Activated B cell treated with CpG ODN at 0.5 μM for 24 hours (primary cell): ENCODE measurements at regions of chr2 and their contacts with region 1.

Region 1: DNA sequence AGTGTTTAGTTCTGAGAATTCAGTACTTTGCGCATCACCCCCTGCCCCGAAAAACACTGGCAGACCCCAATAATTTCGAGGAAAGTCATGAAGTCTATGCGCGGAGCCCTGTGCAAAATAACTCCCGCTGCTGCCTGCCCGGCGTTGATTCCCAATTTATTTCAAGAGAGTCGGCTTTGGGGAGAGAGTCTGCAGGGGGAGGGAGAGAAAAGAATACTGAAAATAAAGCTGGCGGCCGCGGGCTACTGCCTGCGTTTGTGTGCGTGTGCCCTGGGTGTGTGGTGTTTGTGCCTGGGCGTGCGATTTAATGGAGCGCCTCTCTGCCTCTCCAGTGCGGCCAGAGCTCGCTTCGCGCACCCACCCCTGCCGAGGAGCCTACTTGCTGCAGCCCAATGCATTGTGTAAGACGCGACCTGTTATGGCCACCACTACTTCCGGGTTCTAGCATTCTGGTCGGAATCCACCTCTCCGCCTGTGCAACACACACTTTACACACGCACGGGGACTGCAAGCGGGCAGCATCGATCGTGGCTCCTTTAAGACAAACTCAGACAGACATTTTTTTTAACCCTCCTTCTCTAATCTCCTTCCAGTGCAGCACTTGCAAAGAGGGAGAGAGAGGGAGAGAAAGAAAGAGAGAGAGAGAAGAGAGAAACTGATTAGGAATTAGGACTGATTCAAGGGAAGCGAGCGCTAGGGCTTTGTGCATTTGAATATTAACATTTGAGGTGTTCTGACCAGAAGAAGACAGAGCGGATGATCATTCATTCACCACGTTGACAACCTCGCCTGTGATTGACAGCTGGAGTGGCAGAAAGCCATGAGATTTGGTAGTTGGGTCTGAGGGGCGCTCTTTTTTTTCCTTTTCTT is at the start of gene MEIS1:
- DNase-seq: no peak
- ATAC-seq: peak; percentile 61
- H3K4me3 Mint-ChIP-seq: peak within 1 kb of the TSS; percentile 80
- H3K27ac Mint-ChIP-seq: no peak within 1 kb of the TSS
- H3K4me1 Mint-ChIP-seq: peaks cover 48% of the 10 kb centered on the region
- H3K27me3 Mint-ChIP-seq: peaks cover 74% of the 10 kb centered on the region
- CTCF ChIP-seq: no peak
- total RNA-seq, gene MEIS1: not detected in 2 replicates

Region 2: DNA sequence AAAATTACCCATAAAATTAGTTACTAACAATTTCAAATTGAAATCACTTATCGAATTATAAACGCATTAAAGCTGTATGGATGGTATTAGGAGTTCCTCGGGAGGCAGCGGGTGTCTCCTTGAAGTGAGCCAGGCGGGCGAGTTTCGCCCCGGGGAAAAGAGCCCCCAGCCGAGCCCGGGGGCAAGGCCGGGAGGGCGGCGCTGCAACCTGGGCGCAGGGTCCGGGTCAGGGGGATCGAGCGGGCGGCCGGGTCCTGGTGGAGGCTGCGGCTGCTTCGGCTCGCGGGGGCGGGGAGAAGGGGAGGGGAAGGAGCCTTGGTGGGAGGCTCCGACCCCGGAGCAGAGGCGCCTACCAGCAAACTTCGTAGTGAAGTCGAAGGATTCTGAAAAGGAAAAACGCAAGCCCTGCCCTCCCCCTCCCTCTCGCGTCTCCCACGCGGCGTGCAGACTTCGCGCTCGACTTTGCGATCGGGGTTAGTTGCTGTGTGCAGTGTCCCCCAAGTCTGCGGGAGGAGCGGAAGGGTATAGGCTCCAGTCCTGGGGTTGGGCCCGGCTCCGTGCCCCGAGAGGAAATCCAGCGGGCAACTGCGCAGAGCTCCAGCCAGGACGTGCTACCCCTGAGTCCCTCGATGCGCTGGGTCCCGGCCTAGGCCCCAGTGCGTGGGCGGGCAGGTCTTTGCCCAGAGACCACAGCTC is 140.9 kb after region 1 on chr2:
- CTCF ChIA-PET with region 1: no interaction called
- POLR2A ChIA-PET with region 1: no interaction called
- intact Hi-C with region 1: loop called (anchors 2 kb)
- DNase-seq: no peak
- ATAC-seq: no peak
- H3K4me3 Mint-ChIP-seq: peak overlapping the region; percentile 38
- H3K27ac Mint-ChIP-seq: no peak overlapping the region
- H3K4me1 Mint-ChIP-seq: peaks cover 14% of the 10 kb centered on the region
- H3K27me3 Mint-ChIP-seq: peaks cover 62% of the 10 kb centered on the region
- CTCF ChIP-seq: no peak

Region 3: GRCh38 chr2:66581339-66582103 is 146.6 kb after region 1 on chr2:
- CTCF ChIA-PET with region 1: no interaction called
- POLR2A ChIA-PET with region 1: no interaction called
- intact Hi-C with region 1: loop called (anchors 2 kb)
- DNase-seq: no peak
- ATAC-seq: no peak
- H3K4me3 Mint-ChIP-seq: no peak overlapping the region
- H3K27ac Mint-ChIP-seq: no peak overlapping the region
- H3K4me1 Mint-ChIP-seq: peaks cover 2% of the 10 kb centered on the region
- H3K27me3 Mint-ChIP-seq: peaks cover 43% of the 10 kb centered on the region
- CTCF ChIP-seq: no peak

Region 4: GRCh38 chr2:66679442-66679841 is 244.5 kb after region 1 on chr2:
- CTCF ChIA-PET with region 1: no interaction called
- POLR2A ChIA-PET with region 1: no interaction called
- intact Hi-C with region 1: no loop called
- DNase-seq: no peak
- ATAC-seq: no peak
- H3K4me3 Mint-ChIP-seq: no peak overlapping the region
- H3K27ac Mint-ChIP-seq: no peak overlapping the region
- H3K4me1 Mint-ChIP-seq: no peaks in the 10 kb centered on the region
- H3K27me3 Mint-ChIP-seq: peaks cover 2% of the 10 kb centered on the region
- CTCF ChIP-seq: no peak

Region 5: DNA sequence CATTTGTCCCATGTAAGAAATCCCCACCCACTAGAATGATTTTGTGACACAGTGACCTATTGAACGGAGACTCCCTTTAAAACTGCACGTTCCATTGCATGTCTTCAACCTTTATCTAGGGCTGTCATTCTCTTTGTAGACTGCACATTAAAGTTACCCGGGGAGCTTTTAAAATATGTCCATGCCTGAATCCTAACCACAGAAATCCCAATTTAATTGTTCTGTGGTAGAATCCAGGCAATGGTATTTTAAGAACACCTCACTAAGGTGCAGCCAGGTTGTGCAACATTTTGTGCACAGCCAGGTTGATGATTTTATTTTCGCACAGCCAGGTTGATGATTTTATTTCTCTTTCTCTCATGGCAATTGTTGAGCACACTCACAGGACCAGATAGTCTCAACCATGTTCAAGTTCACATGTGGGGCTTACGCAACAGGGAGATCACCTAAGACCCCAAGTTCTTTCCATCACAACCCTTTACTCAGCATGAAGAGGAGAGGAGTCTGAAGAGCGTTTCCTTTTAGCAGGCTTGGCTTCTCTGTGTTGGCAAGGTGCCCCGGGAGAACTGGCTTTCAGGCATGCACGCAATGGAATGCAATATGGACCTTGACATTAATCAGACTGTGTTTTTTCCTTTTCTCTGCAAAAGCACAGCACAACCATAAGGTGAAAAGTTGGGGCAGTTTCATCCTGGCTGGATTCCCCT is 494.9 kb after region 1 on chr2:
- CTCF ChIA-PET with region 1: no interaction called
- POLR2A ChIA-PET with region 1: no interaction called
- intact Hi-C with region 1: no loop called
- DNase-seq: no peak
- ATAC-seq: no peak
- H3K4me3 Mint-ChIP-seq: no peak overlapping the region
- H3K27ac Mint-ChIP-seq: no peak overlapping the region
- H3K4me1 Mint-ChIP-seq: no peaks in the 10 kb centered on the region
- H3K27me3 Mint-ChIP-seq: no peaks in the 10 kb centered on the region
- CTCF ChIP-seq: no peak